Activated CD8-positive, alpha-beta T cell treated with anti-CD3 and anti-CD28 coated beads for 36 hours (primary cell): ENCODE measurements at regions of chr11 and their contacts with region 1.

Region 1: DNA sequence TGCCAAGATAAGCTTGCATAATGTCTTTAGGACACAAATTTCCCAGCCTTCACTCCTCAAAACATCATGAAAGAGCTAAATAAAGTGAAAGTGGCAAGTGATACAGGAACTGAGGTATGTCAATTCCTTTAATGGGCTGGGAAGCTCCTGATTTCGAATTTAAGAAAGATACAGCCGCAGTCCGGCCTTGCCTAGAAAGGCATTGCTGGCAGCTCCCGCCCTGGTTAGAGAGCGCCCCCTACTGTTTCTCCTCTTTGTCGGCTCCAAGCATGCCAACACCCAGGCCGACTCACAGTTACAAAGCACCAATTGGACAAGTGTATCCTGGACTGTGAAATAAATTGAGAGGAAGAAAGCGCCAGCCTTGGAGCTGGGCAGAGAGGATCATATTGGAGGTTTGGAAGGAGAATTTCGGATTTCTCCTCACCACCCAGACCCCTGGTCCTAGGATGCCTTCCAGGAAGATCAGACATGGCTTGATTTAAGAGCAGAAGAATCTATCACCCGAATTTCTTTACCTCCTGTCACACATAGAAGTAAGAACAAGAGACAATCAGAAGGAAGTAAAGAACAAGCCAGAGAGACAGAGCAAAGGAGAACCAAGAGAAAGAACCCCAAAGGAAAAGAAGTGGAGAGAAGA is 84.0 kb downstream of the FAM76B start:
- DNase-seq: peak; percentile 91
- ATAC-seq: peak; percentile 83
- H3K4me3 Mint-ChIP-seq: no peak overlapping the region
- H3K27ac Mint-ChIP-seq: no peak overlapping the region
- H3K4me1 Mint-ChIP-seq: peaks cover 9% of the 10 kb centered on the region
- H3K27me3 Mint-ChIP-seq: peaks cover 5% of the 10 kb centered on the region
- CTCF ChIP-seq: peak; percentile 86

Region 2: GRCh38 chr11:95165638-95166037 is 540.0 kb before region 1 on chr11:
- CTCF ChIA-PET with region 1: interaction called, 10 read pairs
- POLR2A ChIA-PET with region 1: no interaction called
- intact Hi-C with region 1: no loop called
- DNase-seq: no peak
- ATAC-seq: no peak
- H3K4me3 Mint-ChIP-seq: no peak overlapping the region
- H3K27ac Mint-ChIP-seq: peak overlapping the region; percentile 25
- H3K4me1 Mint-ChIP-seq: peaks cover 17% of the 10 kb centered on the region
- H3K27me3 Mint-ChIP-seq: no peaks in the 10 kb centered on the region
- CTCF ChIP-seq: no peak

Region 3: DNA sequence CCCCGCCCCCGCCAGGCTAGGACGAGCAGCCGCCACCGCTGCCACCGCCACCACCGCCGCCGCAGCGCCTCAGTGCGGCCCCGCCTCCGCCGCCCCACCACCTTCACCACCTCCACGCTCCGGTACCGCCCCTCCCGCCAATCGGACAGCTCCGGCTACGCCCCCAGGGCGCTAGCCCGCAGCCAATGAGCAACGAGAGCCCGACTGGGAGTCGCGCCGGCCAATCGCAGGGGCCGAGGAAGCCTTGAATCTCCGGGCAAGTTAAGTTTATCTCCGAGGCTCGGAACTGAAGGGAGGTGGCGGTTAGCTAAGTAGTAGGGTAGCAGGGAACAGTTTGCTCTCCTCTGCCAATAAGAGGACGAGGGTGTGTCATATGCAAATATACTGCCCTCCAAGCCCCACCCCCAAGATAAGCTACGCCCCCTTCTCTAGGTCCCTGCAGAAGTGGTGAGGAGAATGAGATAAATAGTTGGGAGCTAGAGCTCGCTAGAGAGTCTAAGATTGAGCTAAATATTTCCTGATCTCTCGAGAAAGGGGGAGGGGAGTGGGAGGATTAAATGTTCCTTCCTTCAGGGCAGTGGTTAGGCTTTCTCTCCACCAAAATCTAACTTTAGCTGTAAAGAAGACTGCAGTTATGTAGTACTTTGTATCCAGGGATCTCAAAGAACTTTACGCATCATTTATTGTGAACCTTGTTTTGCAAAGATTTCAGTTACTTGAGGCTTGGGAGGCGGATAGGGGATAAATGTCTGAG is 474.3 kb before region 1 on chr11 and contains the start of gene SESN3:
- CTCF ChIA-PET with region 1: interaction called, 11 read pairs
- POLR2A ChIA-PET with region 1: interaction called, 4 read pairs
- intact Hi-C with region 1: loop called (anchors 5 kb)
- DNase-seq: peak; percentile 98
- ATAC-seq: peak; percentile 93
- H3K4me3 Mint-ChIP-seq: peak within 1 kb of the TSS; percentile 92
- H3K27ac Mint-ChIP-seq: peak within 1 kb of the TSS; percentile 78
- H3K4me1 Mint-ChIP-seq: peaks cover 39% of the 10 kb centered on the region
- H3K27me3 Mint-ChIP-seq: no peaks in the 10 kb centered on the region
- CTCF ChIP-seq: no peak
- total RNA-seq, gene SESN3: 19.4 to 19.5 TPM

Region 4: DNA sequence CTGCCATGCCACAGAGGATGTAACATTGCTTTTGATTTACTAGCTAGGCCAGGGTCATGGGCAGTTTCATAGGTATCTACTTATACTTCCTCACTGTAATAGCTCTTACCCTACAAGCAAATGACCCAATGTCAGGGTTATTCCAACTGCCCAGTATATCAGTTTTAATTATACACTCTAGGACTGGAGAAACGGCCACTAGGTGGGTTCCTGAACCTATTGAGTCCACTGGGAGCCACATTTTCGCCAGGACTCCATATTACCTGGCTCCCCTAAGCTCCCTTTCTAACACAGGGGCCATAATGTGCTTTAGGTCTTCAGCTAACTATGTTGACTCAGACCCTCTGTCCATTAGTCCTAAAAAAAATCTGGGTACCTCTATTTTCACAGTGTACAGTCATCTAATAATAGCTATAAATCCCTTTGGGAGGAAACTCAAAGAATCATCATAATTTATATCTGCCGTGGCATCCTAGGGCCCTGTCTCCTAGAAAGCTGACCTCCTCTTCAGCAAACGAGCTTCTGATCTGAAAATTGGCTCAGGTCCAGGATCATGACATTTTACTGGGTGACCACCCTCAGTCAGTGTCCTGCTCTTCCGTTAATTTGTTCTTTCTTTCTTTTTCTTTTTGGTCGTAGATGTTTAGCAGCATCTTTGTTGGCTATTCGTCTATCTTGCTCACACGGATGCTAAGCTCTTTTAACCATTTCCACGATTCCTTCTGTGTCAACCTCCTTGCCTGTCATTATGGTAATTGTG is 160.3 kb before region 1 on chr11:
- CTCF ChIA-PET with region 1: interaction called, 17 read pairs
- POLR2A ChIA-PET with region 1: interaction called, 3 read pairs
- intact Hi-C with region 1: no loop called
- DNase-seq: no peak
- ATAC-seq: no peak
- H3K4me3 Mint-ChIP-seq: no peak overlapping the region
- H3K27ac Mint-ChIP-seq: no peak overlapping the region
- H3K4me1 Mint-ChIP-seq: peaks cover 14% of the 10 kb centered on the region
- H3K27me3 Mint-ChIP-seq: peaks cover 2% of the 10 kb centered on the region
- CTCF ChIP-seq: no peak

Region 5: GRCh38 chr11:95680169-95680929 is 25.3 kb before region 1 on chr11:
- CTCF ChIA-PET with region 1: interaction called, 26 read pairs
- POLR2A ChIA-PET with region 1: interaction called, 3 read pairs
- intact Hi-C with region 1: no loop called
- DNase-seq: no peak
- ATAC-seq: no peak
- H3K4me3 Mint-ChIP-seq: no peak overlapping the region
- H3K27ac Mint-ChIP-seq: peak overlapping the region; percentile 89
- H3K4me1 Mint-ChIP-seq: peaks cover 86% of the 10 kb centered on the region
- H3K27me3 Mint-ChIP-seq: no peaks in the 10 kb centered on the region
- CTCF ChIP-seq: no peak

Region 6: DNA sequence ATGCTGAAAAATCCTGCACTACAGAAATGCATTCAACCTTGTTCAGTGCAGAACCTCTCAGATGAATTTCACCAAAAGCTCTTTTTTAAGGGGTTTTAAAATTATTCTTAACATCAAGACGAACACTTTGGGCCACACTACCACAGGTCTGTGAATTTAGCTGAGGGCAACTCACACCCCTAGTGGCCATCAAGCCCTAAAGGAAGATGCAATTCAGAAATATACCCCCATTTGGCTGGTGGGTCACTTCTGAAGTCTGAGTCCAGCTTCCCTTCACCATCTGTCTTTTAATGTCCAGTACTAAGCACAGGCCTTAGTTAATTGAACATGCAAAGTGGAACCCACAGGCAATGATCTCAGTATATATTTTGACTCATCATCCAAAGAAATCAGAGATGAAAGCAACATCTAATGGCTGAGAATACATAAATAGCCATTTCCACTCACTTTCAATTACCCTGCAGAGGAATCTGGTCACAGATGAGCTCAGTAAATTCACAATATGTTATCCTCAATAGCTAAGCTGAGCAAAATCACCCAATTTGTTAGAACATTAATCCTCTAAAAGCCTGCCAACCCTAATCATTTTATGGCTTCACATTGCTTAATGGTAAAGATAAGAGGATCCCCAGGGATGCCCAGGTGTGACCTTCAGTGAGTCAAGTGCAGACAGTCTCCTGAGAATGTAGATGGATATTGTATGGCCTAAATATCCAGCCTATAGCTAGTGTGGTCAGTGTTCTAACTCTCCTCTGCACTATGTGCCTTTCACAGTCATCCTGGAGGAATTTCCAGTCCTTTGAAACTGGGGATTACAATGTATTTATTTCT is 33.7 kb after region 1 on chr11:
- CTCF ChIA-PET with region 1: interaction called, 11 read pairs
- POLR2A ChIA-PET with region 1: no interaction called
- intact Hi-C with region 1: no loop called
- DNase-seq: no peak
- ATAC-seq: no peak
- H3K4me3 Mint-ChIP-seq: no peak overlapping the region
- H3K27ac Mint-ChIP-seq: no peak overlapping the region
- H3K4me1 Mint-ChIP-seq: no peaks in the 10 kb centered on the region
- H3K27me3 Mint-ChIP-seq: peaks cover 5% of the 10 kb centered on the region
- CTCF ChIP-seq: peak; percentile 21